Heart left ventricle (tissue), 16 donors: ENCODE measurements at regions of chr13 and their contacts with region 1.

Region 1: DNA sequence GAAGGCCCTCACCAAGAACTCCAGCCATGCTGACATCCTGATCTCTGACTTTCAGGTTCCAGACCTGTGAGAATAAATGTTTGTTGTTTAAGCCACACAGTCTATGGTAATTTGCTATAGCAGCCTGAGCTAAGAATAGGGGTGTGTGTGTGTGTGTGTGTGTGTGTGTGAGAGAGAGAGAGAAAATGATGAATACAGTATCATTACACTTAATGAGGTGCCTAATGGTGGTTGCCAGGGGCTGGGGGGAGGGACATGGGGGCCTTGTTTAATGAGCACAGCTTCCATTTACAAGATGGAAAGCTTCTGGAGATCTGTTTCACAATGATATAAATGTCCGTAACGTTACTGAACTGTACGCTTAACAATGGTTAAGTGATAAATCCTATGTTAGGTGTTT is 53.8 kb upstream of the LATS2 start:
- DNase-seq: no peak
- ATAC-seq: no peak
- H3K4me3 ChIP-seq: no peak overlapping the region
- H3K27ac ChIP-seq: no peak overlapping the region
- H3K4me1 ChIP-seq: no peaks in the 10 kb centered on the region
- H3K27me3 ChIP-seq: no peaks in the 10 kb centered on the region
- CTCF ChIP-seq: no peak
- POLR2A ChIP-seq: no peak

Region 2: DNA sequence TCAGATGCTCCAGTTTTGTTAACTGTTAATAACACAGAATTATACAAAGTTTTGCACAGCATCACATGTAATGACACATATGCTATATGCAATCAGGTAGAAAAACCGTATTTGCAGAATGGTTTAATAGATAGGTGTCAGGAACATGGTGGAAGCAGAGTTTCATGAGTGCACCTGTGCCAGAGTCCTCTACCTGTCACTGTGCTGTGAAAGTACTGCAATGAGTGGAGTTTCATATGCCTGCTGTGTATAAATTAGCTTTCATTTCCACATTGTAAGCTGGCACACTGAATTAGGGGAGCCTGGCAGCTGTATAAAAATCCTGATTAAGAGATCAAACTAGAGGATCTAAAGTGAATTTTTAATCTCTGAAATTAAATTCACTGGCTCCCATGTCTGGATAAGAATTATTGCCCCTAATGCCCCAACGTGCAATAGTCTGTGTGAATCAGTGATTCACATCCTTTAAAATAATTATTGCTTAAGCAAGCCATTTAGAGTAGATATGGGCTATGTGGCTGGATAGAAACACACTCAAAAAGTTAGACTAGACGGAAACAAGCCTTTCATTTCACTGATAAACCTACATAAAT is 333.0 kb before region 1 on chr13:
- intact Hi-C with region 1: no loop called
- DNase-seq: no peak
- ATAC-seq: no peak
- H3K4me3 ChIP-seq: no peak overlapping the region
- H3K27ac ChIP-seq: no peak overlapping the region
- H3K4me1 ChIP-seq: peaks cover 0 to 3% (median 0%) of the 10 kb centered on the region in 12 donors
- H3K27me3 ChIP-seq: no peaks in the 10 kb centered on the region
- CTCF ChIP-seq: no peak
- POLR2A ChIP-seq: no peak

Region 3: DNA sequence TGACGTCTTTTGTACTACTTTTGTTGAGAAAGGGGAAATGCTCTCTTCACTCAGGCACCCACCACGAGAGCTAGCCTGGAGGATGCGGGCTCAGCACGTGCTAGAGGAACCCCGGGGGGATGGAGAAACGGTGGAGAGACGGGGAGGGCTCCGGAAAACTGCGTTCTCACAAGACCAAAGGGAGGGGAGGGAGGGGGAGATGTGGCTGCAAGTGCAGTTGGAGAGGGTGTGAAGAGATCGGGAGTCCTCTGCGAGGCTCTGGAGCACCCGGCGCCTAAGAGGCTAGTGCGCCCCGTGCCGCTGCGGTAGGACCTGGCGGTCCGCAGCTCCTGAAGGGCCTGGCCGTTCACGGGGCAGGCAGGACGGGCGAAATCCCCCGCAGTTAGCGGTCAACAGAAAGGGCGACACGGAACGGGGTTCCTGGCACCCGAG is 169.3 kb before region 1 on chr13:
- intact Hi-C with region 1: loop called in 1 of 10 experiments (anchors 10 kb)
- DNase-seq: peak in 3 of 5 donors; percentile 20 to 42 (median 23)
- ATAC-seq: peak in 3 of 4 donors; percentile 37 to 46 (median 38)
- H3K4me3 ChIP-seq: peak overlapping the region in 9 of 12 donors; percentile 10 to 40 (median 28)
- H3K27ac ChIP-seq: no peak overlapping the region
- H3K4me1 ChIP-seq: peaks cover 0 to 15% (median 2%) of the 10 kb centered on the region in 12 donors
- H3K27me3 ChIP-seq: peaks cover 0 to 14% (median 4%) of the 10 kb centered on the region in 9 donors
- CTCF ChIP-seq: no peak
- POLR2A ChIP-seq: no peak

Region 4: GRCh38 chr13:21181671-21182070 is 66.4 kb after region 1 on chr13:
- intact Hi-C with region 1: loop called in 2 of 10 experiments (anchors 2 to 5 kb)
- DNase-seq: no peak
- ATAC-seq: no peak
- H3K4me3 ChIP-seq: no peak overlapping the region
- H3K27ac ChIP-seq: no peak overlapping the region
- H3K4me1 ChIP-seq: peaks cover 0 to 15% (median 10%) of the 10 kb centered on the region in 12 donors
- H3K27me3 ChIP-seq: no peaks in the 10 kb centered on the region
- CTCF ChIP-seq: no peak
- POLR2A ChIP-seq: no peak